K562 (cell line): ENCODE measurements at regions of chr7 and their contacts with region 1.

Region 1: GRCh38 chr7:38222481-38223096 is 44.5 kb downstream of the STARD3NL start:
- DNase-seq: peak; percentile 54 to 73 (median 65)
- ATAC-seq: peak; percentile 88
- H3K4me3 ChIP-seq: no peak overlapping the region
- H3K27ac ChIP-seq: no peak overlapping the region
- H3K4me1 ChIP-seq: no peaks in the 10 kb centered on the region
- H3K27me3 ChIP-seq: no peaks in the 10 kb centered on the region
- CTCF ChIP-seq: peak; percentile 79 to 90 (median 82)
- EP300 ChIP-seq: no peak
- POLR2A ChIP-seq: no peak
- RAD21 ChIP-seq: peak; percentile 87 to 92

Region 2: DNA sequence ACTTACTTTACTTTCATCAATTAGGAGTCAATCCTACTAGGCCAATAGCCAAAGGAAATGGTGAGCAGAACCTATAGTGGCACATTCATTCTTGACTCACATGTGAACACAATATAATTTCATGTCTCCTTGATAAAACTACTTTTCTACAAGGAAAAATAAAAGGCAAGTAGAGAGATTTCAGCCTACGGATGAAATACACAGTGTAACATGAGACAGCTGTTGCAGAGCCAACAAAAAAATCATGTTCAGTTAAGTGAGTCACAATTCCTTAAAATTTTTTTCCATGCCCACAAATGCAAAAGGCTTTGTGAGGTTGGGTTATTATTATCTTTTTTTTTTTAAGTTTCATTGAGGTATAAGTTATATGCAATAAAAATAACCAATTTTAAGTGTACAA is 484.3 kb before region 1 on chr7:
- CTCF ChIA-PET with region 1: no interaction called
- POLR2A ChIA-PET with region 1: no interaction called
- in situ Hi-C with region 1: no loop called
- intact Hi-C with region 1: no loop called
- DNase-seq: no peak
- ATAC-seq: no peak
- H3K4me3 ChIP-seq: no peak overlapping the region
- H3K27ac ChIP-seq: no peak overlapping the region
- H3K4me1 ChIP-seq: no peaks in the 10 kb centered on the region
- H3K27me3 ChIP-seq: no peaks in the 10 kb centered on the region; a peak in 1 of 5 replicates
- CTCF ChIP-seq: no peak
- EP300 ChIP-seq: no peak
- POLR2A ChIP-seq: no peak
- RAD21 ChIP-seq: no peak

Region 3: DNA sequence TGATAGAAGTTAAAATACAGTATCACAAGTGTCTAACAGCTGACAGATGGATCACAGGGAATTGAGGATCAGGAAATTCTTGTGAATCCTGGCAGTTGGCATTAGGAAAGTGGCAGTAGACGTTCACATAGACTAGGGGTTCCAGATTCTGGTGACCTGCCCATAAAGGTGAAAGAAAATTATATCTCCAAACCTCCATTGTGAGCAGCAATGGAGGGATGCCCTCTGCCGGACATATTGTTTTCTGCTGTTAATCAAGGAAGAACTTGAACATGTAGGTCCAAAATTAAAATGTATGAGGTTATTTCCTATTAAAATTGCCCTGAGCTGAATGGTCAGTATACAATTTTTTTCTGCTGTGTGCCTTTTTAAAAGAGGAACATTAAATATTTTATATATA is 369.1 kb before region 1 on chr7:
- CTCF ChIA-PET with region 1: no interaction called
- POLR2A ChIA-PET with region 1: no interaction called
- in situ Hi-C with region 1: no loop called
- intact Hi-C with region 1: no loop called
- DNase-seq: peak; percentile 16 to 33 (median 28)
- ATAC-seq: no peak
- H3K4me3 ChIP-seq: no peak overlapping the region
- H3K27ac ChIP-seq: no peak overlapping the region
- H3K4me1 ChIP-seq: no peaks in the 10 kb centered on the region
- H3K27me3 ChIP-seq: peaks cover 0 to 6% of the 10 kb centered on the region in 2 experiments; a peak in 2 of 5 replicates
- CTCF ChIP-seq: peak; percentile 31 to 61 (median 45); a peak in 4 of 6 replicates
- EP300 ChIP-seq: no peak
- POLR2A ChIP-seq: no peak
- RAD21 ChIP-seq: peak; percentile 23 to 62; a peak in 2 of 4 replicates

Region 4: DNA sequence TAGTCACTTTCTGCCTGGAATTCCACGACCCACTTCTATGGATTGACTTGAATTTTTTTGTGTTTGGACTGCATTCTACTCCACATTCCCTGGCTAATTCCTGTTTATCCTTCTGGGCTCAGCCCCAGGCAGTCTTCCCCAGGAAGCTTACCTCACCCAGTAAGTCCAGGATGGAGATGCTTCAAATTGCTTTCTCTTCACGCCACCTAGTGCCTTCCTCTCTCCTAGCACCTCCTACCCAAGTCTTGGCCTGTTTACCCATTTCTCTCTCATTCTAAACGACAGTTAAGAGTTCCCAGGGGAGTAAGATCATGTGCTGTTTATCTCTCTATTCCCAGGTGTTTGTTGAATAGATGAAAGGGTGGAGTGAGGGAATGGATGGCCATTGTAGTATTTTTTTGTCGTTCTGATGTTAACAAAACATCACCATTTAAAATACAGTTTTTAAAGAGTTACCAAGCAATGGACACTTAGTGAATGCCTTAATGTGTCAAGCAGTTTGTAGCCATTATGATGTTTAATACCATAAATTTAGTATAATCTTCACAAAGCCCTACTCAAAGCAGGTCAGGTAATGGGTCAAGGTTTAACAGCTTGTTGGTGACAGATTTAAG is 96.3 kb after region 1 on chr7:
- CTCF ChIA-PET with region 1: no interaction called
- POLR2A ChIA-PET with region 1: no interaction called
- in situ Hi-C with region 1: no loop called
- intact Hi-C with region 1: loop called (anchors 2 kb)
- DNase-seq: peak in 3 of 4 experiments; percentile 30 to 66 (median 55)
- ATAC-seq: peak; percentile 92
- H3K4me3 ChIP-seq: no peak overlapping the region
- H3K27ac ChIP-seq: no peak overlapping the region
- H3K4me1 ChIP-seq: no peaks in the 10 kb centered on the region; a peak in 1 of 5 replicates
- H3K27me3 ChIP-seq: 0 out of 5 replicates have a peak, but pooled peaks cover 0 to 5% of the 10 kb centered on the region in 2 experiments
- CTCF ChIP-seq: peak; percentile 59 to 82 (median 63)
- EP300 ChIP-seq: no peak
- POLR2A ChIP-seq: no peak
- RAD21 ChIP-seq: peak; percentile 79 to 91